Motor neuron (in vitro differentiated cells): ENCODE measurements at regions of chr1 and their contacts with region 1.

Region 1: GRCh38 chr1:85307987-85308832 is 31.8 kb upstream of the BCL10 start:
- ATAC-seq: peak; percentile 98 to 100 (median 100)
- H3K4me3 ChIP-seq: no peak overlapping the region
- H3K27ac ChIP-seq: no peak overlapping the region
- H3K4me1 ChIP-seq: no peaks in the 10 kb centered on the region

Region 2: GRCh38 chr1:85494904-85495266 is 186.7 kb after region 1 on chr1:
- in situ Hi-C with region 1: loop called in 2 of 9 experiments (anchors 25 kb)
- ATAC-seq: peak in 3 of 8 experiments; percentile 37 to 43 (median 41)
- H3K4me3 ChIP-seq: no peak overlapping the region
- H3K27ac ChIP-seq: peak overlapping the region in 1 of 2 donors; percentile 18
- H3K4me1 ChIP-seq: peaks cover 0 to 6% of the 10 kb centered on the region in 2 donors

Region 3: DNA sequence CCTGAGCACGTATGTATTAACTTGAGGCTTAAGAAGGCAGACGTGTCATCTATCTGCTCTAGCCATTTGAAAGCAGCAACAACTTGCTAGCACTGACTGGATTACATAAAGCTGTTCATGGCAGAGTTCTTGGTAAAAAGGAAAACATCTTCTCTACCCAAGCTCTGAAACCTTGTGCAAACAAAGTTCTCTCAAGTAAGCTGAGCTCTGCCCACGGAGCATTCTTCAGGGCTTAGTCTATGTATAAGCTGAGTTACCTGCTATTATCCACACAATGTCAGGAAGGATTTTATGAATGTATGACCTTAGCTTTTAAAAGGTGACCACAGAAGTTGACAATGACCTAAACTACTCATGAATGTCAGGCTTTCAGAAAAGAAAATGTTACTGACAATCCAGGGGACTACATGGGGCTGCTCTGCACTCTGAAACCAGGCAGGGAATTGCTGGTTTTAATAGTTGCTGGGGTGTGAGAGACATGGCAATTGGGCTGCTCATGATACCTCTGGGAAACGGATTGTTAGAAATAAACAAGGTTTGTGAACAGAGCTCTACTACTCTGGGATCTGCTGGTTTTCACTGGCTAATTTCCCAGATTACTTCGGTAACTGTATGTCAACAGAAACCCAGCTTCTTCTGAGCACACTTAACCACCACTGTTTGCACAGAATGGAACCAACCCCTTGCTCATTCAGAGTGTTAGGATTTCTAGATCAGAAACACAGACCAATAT is 242.7 kb after region 1 on chr1:
- in situ Hi-C with region 1: loop called in 1 of 9 experiments (anchors 25 kb)
- ATAC-seq: peak in 3 of 8 experiments; percentile 31 to 93 (median 61)
- H3K4me3 ChIP-seq: no peak overlapping the region
- H3K27ac ChIP-seq: no peak overlapping the region
- H3K4me1 ChIP-seq: no peaks in the 10 kb centered on the region

Region 4: GRCh38 chr1:85692730-85693314 is 384.6 kb after region 1 on chr1:
- in situ Hi-C with region 1: loop called in 5 of 9 experiments (anchors 25 kb)
- ATAC-seq: peak in 2 of 8 experiments; percentile 18 to 31
- H3K4me3 ChIP-seq: no peak overlapping the region
- H3K27ac ChIP-seq: no peak overlapping the region
- H3K4me1 ChIP-seq: no peaks in the 10 kb centered on the region

Region 5: GRCh38 chr1:85894651-85895050 is 586.4 kb after region 1 on chr1:
- in situ Hi-C with region 1: loop called in 2 of 9 experiments (anchors 25 kb)
- ATAC-seq: peak in 3 of 8 experiments; percentile 46 to 70 (median 55)
- H3K4me3 ChIP-seq: no peak overlapping the region
- H3K27ac ChIP-seq: no peak overlapping the region
- H3K4me1 ChIP-seq: no peaks in the 10 kb centered on the region